Activated B cell treated with CpG ODN at 0.5 μM for 24 hours (primary cell): ENCODE measurements at regions of chr11 and their contacts with region 1.

Region 1: GRCh38 chr11:58675334-58676155 is 53.1 kb downstream of the CNTF start:
- DNase-seq: peak; percentile 67
- ATAC-seq: peak; percentile 80
- H3K4me3 Mint-ChIP-seq: no peak overlapping the region
- H3K27ac Mint-ChIP-seq: no peak overlapping the region
- H3K4me1 Mint-ChIP-seq: no peaks in the 10 kb centered on the region
- H3K27me3 Mint-ChIP-seq: peaks cover 3% of the 10 kb centered on the region
- CTCF ChIP-seq: peak; percentile 59

Region 2: DNA sequence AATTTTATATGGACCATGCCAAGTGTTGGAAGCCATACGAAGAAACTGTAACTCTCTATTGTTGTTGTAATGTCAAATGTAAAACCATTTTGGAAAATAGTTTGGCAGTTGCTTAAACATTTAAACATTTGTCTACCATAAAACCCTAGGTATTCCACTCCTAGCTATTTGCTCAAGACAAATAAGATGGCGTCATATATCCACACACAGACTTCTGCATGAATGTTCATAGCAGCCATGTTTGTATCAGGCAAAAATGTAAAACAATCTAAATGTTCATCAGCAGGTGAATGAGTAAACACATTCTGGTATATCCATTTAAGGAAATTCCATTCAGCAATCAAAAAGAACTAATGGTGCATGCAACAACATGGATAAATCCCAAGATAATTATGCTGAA is 578.1 kb before region 1 on chr11:
- CTCF ChIA-PET with region 1: no interaction called
- POLR2A ChIA-PET with region 1: interaction called, 13 read pairs
- intact Hi-C with region 1: no loop called
- DNase-seq: no peak
- ATAC-seq: no peak
- H3K4me3 Mint-ChIP-seq: no peak overlapping the region
- H3K27ac Mint-ChIP-seq: no peak overlapping the region
- H3K4me1 Mint-ChIP-seq: no peaks in the 10 kb centered on the region
- H3K27me3 Mint-ChIP-seq: peaks cover 6% of the 10 kb centered on the region
- CTCF ChIP-seq: no peak

Region 3: GRCh38 chr11:58616594-58616993 is 59.0 kb before region 1 on chr11:
- CTCF ChIA-PET with region 1: no interaction called
- POLR2A ChIA-PET with region 1: no interaction called
- intact Hi-C with region 1: no loop called
- DNase-seq: no peak
- ATAC-seq: no peak
- H3K4me3 Mint-ChIP-seq: no peak overlapping the region
- H3K27ac Mint-ChIP-seq: no peak overlapping the region
- H3K4me1 Mint-ChIP-seq: peaks cover 3% of the 10 kb centered on the region
- H3K27me3 Mint-ChIP-seq: no peaks in the 10 kb centered on the region
- CTCF ChIP-seq: no peak

Region 4: GRCh38 chr11:58647141-58647699 is 28.3 kb before region 1 on chr11:
- CTCF ChIA-PET with region 1: interaction called, 8 read pairs
- POLR2A ChIA-PET with region 1: no interaction called
- intact Hi-C with region 1: loop called (anchors 1 kb)
- DNase-seq: peak; percentile 33
- ATAC-seq: peak; percentile 93
- H3K4me3 Mint-ChIP-seq: peak overlapping the region; percentile 3
- H3K27ac Mint-ChIP-seq: peak overlapping the region; percentile 21
- H3K4me1 Mint-ChIP-seq: peaks cover 20% of the 10 kb centered on the region
- H3K27me3 Mint-ChIP-seq: peaks cover 2% of the 10 kb centered on the region
- CTCF ChIP-seq: no peak

Region 5: GRCh38 chr11:58788355-58789023 is 112.9 kb after region 1 on chr11:
- CTCF ChIA-PET with region 1: no interaction called
- POLR2A ChIA-PET with region 1: no interaction called
- intact Hi-C with region 1: loop called (anchors 5 kb)
- DNase-seq: no peak
- ATAC-seq: peak; percentile 73
- H3K4me3 Mint-ChIP-seq: no peak overlapping the region
- H3K27ac Mint-ChIP-seq: no peak overlapping the region
- H3K4me1 Mint-ChIP-seq: no peaks in the 10 kb centered on the region
- H3K27me3 Mint-ChIP-seq: peaks cover 3% of the 10 kb centered on the region
- CTCF ChIP-seq: no peak

Region 6: GRCh38 chr11:59040607-59041006 is 365.1 kb after region 1 on chr11:
- CTCF ChIA-PET with region 1: no interaction called
- POLR2A ChIA-PET with region 1: no interaction called
- intact Hi-C with region 1: no loop called
- DNase-seq: no peak
- ATAC-seq: no peak
- H3K4me3 Mint-ChIP-seq: no peak overlapping the region
- H3K27ac Mint-ChIP-seq: no peak overlapping the region
- H3K4me1 Mint-ChIP-seq: peaks cover 14% of the 10 kb centered on the region
- H3K27me3 Mint-ChIP-seq: no peaks in the 10 kb centered on the region
- CTCF ChIP-seq: no peak